Panc1 (cell line): ENCODE measurements at regions of chr16 and their contacts with region 1.

Region 1: DNA sequence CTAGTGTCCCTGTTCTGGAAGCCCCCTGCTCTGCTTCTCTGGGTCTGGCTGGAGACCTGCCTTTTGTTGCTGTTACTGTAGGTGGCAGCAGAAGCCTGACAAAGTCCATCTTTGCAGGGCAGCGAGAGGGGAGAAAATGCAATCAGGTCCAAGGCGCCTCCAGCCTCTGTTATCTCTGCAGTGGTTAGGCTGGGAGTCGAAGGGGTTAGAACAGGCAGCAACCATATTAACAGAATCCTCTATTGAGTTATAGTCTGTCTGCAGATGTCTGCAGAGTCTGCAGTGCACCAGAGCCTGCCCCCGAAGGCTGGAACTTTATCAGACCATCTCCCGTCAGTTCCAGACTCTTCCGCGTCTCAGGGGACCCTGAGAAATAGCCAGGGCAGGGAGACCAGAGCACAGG is 404.9 kb upstream of the EEF2KMT start:
- DNase-seq: no peak
- ATAC-seq: peak; percentile 89
- H3K4me3 ChIP-seq: no peak overlapping the region
- H3K27ac ChIP-seq: no peak overlapping the region
- H3K4me1 ChIP-seq: no peaks in the 10 kb centered on the region
- H3K27me3 ChIP-seq: peaks cover 2% of the 10 kb centered on the region; the same call in 1 of the 2 replicates
- CTCF ChIP-seq: peak; percentile 74

Region 2: DNA sequence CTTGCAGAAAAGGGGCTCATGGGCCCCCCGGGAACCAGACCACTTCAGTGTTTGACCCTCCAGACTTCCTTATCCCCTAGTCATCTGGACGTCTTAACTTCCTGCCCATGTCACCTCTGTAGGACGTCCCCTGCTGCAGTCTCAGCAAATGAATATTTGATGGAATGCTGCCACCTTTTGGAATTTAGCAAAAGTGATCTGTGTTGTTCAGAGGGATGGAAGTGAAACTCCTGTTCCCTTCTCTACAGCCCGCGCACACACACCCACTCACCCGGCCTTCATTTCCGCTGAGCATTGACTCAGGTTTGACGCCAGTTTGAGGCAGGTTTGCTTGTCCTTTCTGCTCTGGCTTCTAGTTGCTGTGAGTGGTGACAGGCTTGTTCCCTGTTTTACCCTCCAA is 102.3 kb after region 1 on chr16:
- CTCF ChIA-PET with region 1: no interaction called
- POLR2A ChIA-PET with region 1: no interaction called
- in situ Hi-C with region 1: no loop called
- intact Hi-C with region 1: loop called (anchors 1 kb)
- DNase-seq: no peak
- ATAC-seq: peak; percentile 95
- H3K4me3 ChIP-seq: no peak overlapping the region
- H3K27ac ChIP-seq: no peak overlapping the region
- H3K4me1 ChIP-seq: no peaks in the 10 kb centered on the region
- H3K27me3 ChIP-seq: peaks cover 2% of the 10 kb centered on the region; the same call in 1 of the 2 replicates
- CTCF ChIP-seq: peak; percentile 41

Region 3: GRCh38 chr16:5615868-5616642 is 113.6 kb after region 1 on chr16:
- CTCF ChIA-PET with region 1: interaction called, 6 read pairs
- POLR2A ChIA-PET with region 1: no interaction called
- in situ Hi-C with region 1: no loop called
- intact Hi-C with region 1: loop called (anchors 1 kb)
- DNase-seq: no peak
- ATAC-seq: peak; percentile 94
- H3K4me3 ChIP-seq: peak overlapping the region in 1 of 2 experiments; percentile 30; a peak in 2 of 4 replicates
- H3K27ac ChIP-seq: no peak overlapping the region
- H3K4me1 ChIP-seq: peaks cover 4% of the 10 kb centered on the region; the same call in 1 of the 2 replicates
- H3K27me3 ChIP-seq: peaks cover 4% of the 10 kb centered on the region; the same call in 1 of the 2 replicates
- CTCF ChIP-seq: peak; percentile 93

Region 4: GRCh38 chr16:6643080-6643686 is 1140.7 kb after region 1 on chr16:
- CTCF ChIA-PET with region 1: no interaction called
- POLR2A ChIA-PET with region 1: no interaction called
- in situ Hi-C with region 1: no loop called
- intact Hi-C with region 1: loop called (anchors 5 kb)
- DNase-seq: peak; percentile 54
- ATAC-seq: no peak
- H3K4me3 ChIP-seq: no peak overlapping the region
- H3K27ac ChIP-seq: no peak overlapping the region
- H3K4me1 ChIP-seq: no peaks in the 10 kb centered on the region
- H3K27me3 ChIP-seq: peaks cover 26% of the 10 kb centered on the region
- CTCF ChIP-seq: peak; percentile 80; the same call in 1 of the 2 replicates